WTC11 (cell line): ENCODE measurements at regions of chr1 and their contacts with region 1.

Region 1: GRCh38 chr1:154558575-154559465 is at the start of gene UBE2Q1:
- DNase-seq: peak; percentile 95
- ATAC-seq: peak; percentile 70
- H3K4me3 Mint-ChIP-seq: peak within 1 kb of the TSS; percentile 94
- H3K27ac Mint-ChIP-seq: peak within 1 kb of the TSS; percentile 89
- H3K4me1 Mint-ChIP-seq: peaks cover 28% of the 10 kb centered on the region
- H3K27me3 Mint-ChIP-seq: no peaks in the 10 kb centered on the region
- CTCF ChIP-seq: no peak
- total RNA-seq, gene UBE2Q1: 60.8 to 62.7 TPM (median 61.6 TPM) in 3 replicates

Region 2: DNA sequence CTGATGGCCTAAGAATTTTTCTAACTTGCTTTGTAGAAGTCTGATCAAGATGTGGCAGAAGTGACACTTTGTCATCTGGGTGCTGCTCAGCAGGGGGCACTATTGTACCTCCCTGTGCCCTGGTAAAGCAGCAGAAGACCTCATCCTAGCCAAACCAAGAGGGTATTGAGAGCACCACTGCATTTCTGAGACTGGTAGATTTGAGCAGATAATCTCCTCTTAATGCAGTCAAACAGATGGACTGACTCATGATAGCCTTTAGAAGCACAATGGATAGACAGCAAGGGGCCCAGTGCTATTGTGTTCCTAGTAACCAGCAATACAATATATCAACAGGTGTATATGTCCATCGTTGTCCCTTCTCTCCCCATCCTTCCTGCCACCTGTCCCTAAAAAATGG is 372.6 kb before region 1 on chr1:
- CTCF ChIA-PET with region 1: no interaction called
- POLR2A ChIA-PET with region 1: no interaction called
- DNase-seq: peak; percentile 76
- ATAC-seq: no peak; the same call in 1 of the 2 replicates
- H3K4me3 Mint-ChIP-seq: peak overlapping the region; percentile 56
- H3K27ac Mint-ChIP-seq: peak overlapping the region; percentile 96
- H3K4me1 Mint-ChIP-seq: peaks cover 37% of the 10 kb centered on the region
- H3K27me3 Mint-ChIP-seq: no peaks in the 10 kb centered on the region
- CTCF ChIP-seq: peak; percentile 32; the same call in 1 of the 2 replicates

Region 3: GRCh38 chr1:154663471-154664060 is 104.7 kb after region 1 on chr1:
- CTCF ChIA-PET with region 1: interaction called, 14 read pairs
- POLR2A ChIA-PET with region 1: no interaction called
- DNase-seq: no peak
- ATAC-seq: no peak
- H3K4me3 Mint-ChIP-seq: no peak overlapping the region
- H3K27ac Mint-ChIP-seq: no peak overlapping the region
- H3K4me1 Mint-ChIP-seq: no peaks in the 10 kb centered on the region
- H3K27me3 Mint-ChIP-seq: peaks cover 2% of the 10 kb centered on the region; the same call in 1 of the 2 replicates
- CTCF ChIP-seq: no peak